A549 (cell line): ENCODE measurements at regions of chr19 and their contacts with region 1.

Region 1: GRCh38 chr19:42244347-42245220 is 2.2 kb upstream of the GSK3A start:
- DNase-seq: peak; percentile 99
- ATAC-seq: peak; percentile 44 to 64
- H3K4me3 ChIP-seq: peak overlapping the region; percentile 65
- H3K27ac ChIP-seq: peak overlapping the region; percentile 87 to 90
- H3K4me1 ChIP-seq: peaks cover 60% of the 10 kb centered on the region
- CTCF ChIP-seq: peak; percentile 86
- EP300 ChIP-seq: no peak; a peak in 1 of 5 replicates
- POLR2A ChIP-seq: peak; percentile 18; the same call in 1 of the 2 replicates
- RAD21 ChIP-seq: peak; percentile 54 to 64

Region 2: DNA sequence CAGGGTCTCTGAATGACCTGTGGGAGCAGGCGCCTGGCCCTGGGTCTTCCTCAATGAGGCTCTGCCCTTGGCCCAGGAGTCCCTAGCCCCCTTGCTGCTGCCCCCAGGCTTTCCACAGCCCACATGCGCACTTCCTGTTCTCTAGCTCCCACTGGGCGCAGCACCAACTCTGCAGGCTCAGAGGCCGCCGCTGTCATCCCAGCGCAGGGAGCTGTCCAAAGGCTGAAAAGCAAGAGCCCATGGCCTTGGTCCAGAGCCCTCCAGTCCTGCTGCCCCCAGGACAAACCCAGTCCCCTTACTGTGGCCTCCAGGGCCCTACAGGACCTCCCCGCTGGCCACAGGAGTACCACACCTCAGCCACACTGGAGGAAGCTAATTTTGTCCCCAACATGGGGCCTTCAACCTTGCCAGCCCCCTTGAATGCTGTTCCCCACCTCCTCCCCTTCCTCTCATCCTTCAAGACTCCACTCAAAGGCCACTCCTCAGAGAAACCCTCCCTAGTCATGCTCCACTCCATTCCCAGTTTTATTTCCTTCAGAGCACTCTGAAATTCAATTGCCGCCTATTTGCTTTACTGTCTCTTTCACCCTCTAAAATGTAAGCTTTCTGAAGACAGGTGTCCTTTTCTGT is 104.3 kb before region 1 on chr19:
- CTCF ChIA-PET with region 1: interaction called, 118 read pairs
- POLR2A ChIA-PET with region 1: interaction called, 5 read pairs
- DNase-seq: peak in 1 of 2 experiments; percentile 53
- ATAC-seq: peak; percentile 72 to 81
- H3K4me3 ChIP-seq: no peak overlapping the region
- H3K27ac ChIP-seq: no peak overlapping the region
- H3K4me1 ChIP-seq: no peaks in the 10 kb centered on the region
- CTCF ChIP-seq: no peak
- EP300 ChIP-seq: no peak
- POLR2A ChIP-seq: no peak
- RAD21 ChIP-seq: 0 out of 5 replicates have a peak, but pooled peaks of 1 of the 2 experiments have one; percentile 9

Region 3: GRCh38 chr19:42219812-42220750 is 24.5 kb before region 1 on chr19 and contains the start of gene ZNF526:
- CTCF ChIA-PET with region 1: interaction called, 185 read pairs
- POLR2A ChIA-PET with region 1: interaction called, 26 read pairs
- DNase-seq: peak; percentile 100
- ATAC-seq: peak; percentile 81 to 92
- H3K4me3 ChIP-seq: peak within 1 kb of the TSS; percentile 77
- H3K27ac ChIP-seq: peak within 1 kb of the TSS; percentile 85 to 89
- H3K4me1 ChIP-seq: peaks cover 39% of the 10 kb centered on the region
- CTCF ChIP-seq: no peak
- EP300 ChIP-seq: no peak
- POLR2A ChIP-seq: peak; percentile 87
- RAD21 ChIP-seq: no peak
- polyA plus RNA-seq, gene ZNF526: 7.1 and 8.7 TPM in 2 replicates

Region 4: GRCh38 chr19:42254989-42255765 is 10.6 kb after region 1 on chr19 and contains the start of gene ERF:
- CTCF ChIA-PET with region 1: interaction called, 82 read pairs
- POLR2A ChIA-PET with region 1: interaction called, 28 read pairs
- DNase-seq: peak; percentile 96 to 98
- ATAC-seq: peak; percentile 48 to 72
- H3K4me3 ChIP-seq: peak within 1 kb of the TSS; percentile 94
- H3K27ac ChIP-seq: peak within 1 kb of the TSS; percentile 94 to 96
- H3K4me1 ChIP-seq: peaks cover 46% of the 10 kb centered on the region
- CTCF ChIP-seq: no peak
- EP300 ChIP-seq: no peak; a peak in 1 of 5 replicates
- POLR2A ChIP-seq: peak; percentile 96
- RAD21 ChIP-seq: no peak
- polyA plus RNA-seq, gene ERF: 71.9 and 103 TPM in 2 replicates

Region 5: GRCh38 chr19:42268704-42269477 is 24.3 kb after region 1 on chr19 and contains the start of gene CIC:
- CTCF ChIA-PET with region 1: interaction called, 373 read pairs
- POLR2A ChIA-PET with region 1: interaction called, 18 read pairs
- DNase-seq: peak; percentile 100
- ATAC-seq: peak; percentile 80 to 93
- H3K4me3 ChIP-seq: peak within 1 kb of the TSS; percentile 58
- H3K27ac ChIP-seq: peak within 1 kb of the TSS; percentile 87 to 94
- H3K4me1 ChIP-seq: peaks cover 28% of the 10 kb centered on the region
- CTCF ChIP-seq: no peak
- EP300 ChIP-seq: no peak; a peak in 1 of 5 replicates
- POLR2A ChIP-seq: no peak
- RAD21 ChIP-seq: no peak
- polyA plus RNA-seq, gene CIC: 7.2 and 7.7 TPM in 2 replicates

Region 6: GRCh38 chr19:42313096-42313839 is 68.7 kb after region 1 on chr19 and contains the start of gene TMEM145:
- CTCF ChIA-PET with region 1: interaction called, 39 read pairs
- POLR2A ChIA-PET with region 1: no interaction called
- DNase-seq: peak; percentile 67 to 92
- ATAC-seq: peak; percentile 67 to 82
- H3K4me3 ChIP-seq: peak within 1 kb of the TSS; percentile 51
- H3K27ac ChIP-seq: peak within 1 kb of the TSS; percentile 32 to 79; a peak in 5 of 6 replicates
- H3K4me1 ChIP-seq: peaks cover 5% of the 10 kb centered on the region; the same call in 1 of the 3 replicates
- CTCF ChIP-seq: peak; percentile 36
- EP300 ChIP-seq: no peak
- POLR2A ChIP-seq: no peak
- RAD21 ChIP-seq: no peak; a peak in 1 of 5 replicates
- polyA plus RNA-seq, gene TMEM145: 0.71 and 1.8 TPM in 2 replicates

Region 7: DNA sequence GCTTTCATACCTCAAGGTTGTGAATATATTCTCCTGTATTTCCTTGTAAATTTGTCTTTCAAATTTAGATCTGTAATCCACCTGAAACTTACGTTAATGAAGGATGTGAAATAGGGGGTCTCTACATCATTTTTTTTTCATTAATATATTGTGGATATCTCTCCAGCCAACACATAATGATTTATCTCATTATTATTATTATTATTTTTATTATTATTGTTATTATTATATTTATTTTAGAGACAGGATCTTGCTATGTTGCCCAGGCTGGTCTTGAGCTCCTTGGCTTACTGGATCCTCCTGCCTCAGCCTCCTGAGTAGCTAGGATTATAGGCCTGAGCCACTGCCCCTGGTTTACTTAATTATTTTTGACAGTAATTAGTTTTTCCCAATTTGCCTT is 186.9 kb after region 1 on chr19:
- CTCF ChIA-PET with region 1: no interaction called
- POLR2A ChIA-PET with region 1: no interaction called
- DNase-seq: no peak
- ATAC-seq: no peak
- H3K4me3 ChIP-seq: no peak overlapping the region
- H3K27ac ChIP-seq: no peak overlapping the region
- H3K4me1 ChIP-seq: peaks cover 21% of the 10 kb centered on the region
- CTCF ChIP-seq: no peak
- EP300 ChIP-seq: no peak
- POLR2A ChIP-seq: no peak
- RAD21 ChIP-seq: no peak